ENCODE measurements at regions of chr11 and their contacts with region 1.

Region 1: DNA sequence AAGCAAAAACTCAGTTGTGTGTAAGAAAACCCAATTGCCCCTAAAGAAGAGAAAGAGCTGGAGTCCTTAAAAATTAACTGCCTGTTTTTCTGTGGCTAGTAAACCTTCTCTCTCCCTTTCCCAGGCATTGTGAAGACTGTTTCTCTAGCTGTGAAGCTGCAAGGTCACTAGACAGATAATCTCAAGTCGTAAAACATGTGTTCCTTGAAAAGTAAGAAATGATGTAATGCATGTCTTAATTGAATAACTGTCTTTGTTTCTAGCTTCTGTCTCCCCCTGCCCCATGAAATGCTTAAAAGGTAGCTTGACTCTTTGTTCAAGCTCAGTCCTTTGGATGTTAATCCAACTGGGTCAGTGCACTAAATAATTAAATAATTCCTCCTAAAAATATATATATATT is 29.5 kb upstream of the FAM181B start:
- DNase-seq: no peak
- H3K4me3 ChIP-seq: no peak overlapping the region
- H3K27ac ChIP-seq: no peak overlapping the region
- H3K4me1 ChIP-seq: peaks cover 0 to 6% (median 0%) of the 10 kb centered on the region in 4 donors
- H3K27me3 ChIP-seq: no peaks in the 10 kb centered on the region
- CTCF ChIP-seq: no peak
- EP300 ChIP-seq: no peak
- POLR2A ChIP-seq: no peak

Region 2: DNA sequence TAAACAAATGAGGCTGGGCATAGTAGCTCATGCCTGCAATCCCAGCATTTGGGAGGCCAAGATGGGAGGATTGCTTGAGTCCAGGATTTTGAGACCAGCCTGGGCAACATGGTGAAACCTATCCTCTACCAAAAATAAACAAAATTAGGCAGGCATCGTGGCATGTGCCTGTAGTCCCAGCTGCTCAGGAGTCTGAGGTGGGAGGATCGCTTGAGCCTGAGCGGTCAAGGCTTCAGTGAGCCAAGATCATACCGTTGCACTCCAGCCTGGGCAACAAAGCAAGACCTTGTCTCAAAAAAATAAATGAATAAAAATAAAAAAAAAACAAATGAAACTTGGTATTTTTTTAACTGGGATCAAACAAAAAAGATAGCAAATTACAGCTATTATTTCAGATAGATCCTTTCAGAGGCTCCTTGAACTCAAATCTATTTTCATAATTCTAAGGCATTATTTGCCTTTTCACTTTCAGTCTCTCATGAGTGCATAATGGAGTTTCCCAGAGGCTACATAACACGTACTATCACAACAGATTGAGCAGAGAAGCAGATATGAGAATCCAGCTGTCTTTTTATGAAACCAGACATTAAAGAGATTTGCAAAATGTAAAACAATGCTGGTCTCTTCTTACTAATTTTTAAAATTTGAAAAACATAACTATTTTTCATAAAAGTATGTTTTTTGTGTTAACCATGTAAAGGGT is 161.5 kb after region 1 on chr11:
- in situ Hi-C with region 1: no loop called
- intact Hi-C with region 1: loop called (anchors 5 kb)
- DNase-seq: no peak
- H3K4me3 ChIP-seq: no peak overlapping the region
- H3K27ac ChIP-seq: no peak overlapping the region
- H3K4me1 ChIP-seq: peaks cover 0 to 8% (median 0%) of the 10 kb centered on the region in 4 donors
- H3K27me3 ChIP-seq: no peaks in the 10 kb centered on the region
- CTCF ChIP-seq: no peak
- EP300 ChIP-seq: no peak
- POLR2A ChIP-seq: no peak

Region 3: DNA sequence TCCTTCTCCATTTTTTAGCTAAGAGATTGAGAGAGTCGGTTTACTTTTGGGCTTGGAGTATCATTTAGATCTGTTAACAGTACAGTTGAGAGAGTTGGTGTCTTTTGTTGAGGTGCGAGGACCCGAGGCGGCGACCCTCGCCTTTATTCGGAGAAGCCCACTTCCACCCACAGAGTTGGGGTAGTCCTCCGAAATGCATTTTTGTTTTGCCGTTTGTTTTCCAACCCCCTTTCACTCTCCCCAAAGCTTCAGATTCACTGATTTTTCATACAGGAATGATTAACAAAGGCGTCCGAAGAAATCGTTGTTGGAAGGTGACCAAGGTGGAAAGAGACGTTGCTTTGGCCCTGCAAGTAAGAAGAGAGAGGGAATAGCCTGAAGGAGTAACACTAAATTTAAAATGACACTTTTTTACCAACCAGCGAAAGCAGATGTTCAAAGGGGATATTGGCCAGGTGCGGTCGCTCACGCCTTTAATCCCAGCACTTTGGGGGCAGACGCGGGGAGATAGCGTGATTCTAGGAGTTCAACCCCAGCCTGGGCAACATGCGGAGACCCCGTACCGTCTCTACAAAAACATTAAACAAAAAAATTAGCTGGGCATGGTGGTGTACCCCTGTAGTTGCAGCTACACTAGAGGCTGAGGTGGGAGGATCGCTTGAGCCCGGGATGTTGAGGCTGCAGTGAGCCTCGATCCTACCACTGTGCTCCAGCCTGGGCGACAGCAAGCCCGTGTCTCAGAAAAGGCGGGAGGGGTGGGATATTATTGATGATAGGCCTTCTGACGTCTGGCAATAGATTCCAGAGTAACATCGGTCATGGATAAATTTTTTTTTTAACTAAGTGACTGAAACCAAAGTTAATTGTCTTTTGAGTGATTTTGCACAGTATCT is 309.4 kb after region 1 on chr11:
- in situ Hi-C with region 1: no loop called
- intact Hi-C with region 1: no loop called
- DNase-seq: no peak
- H3K4me3 ChIP-seq: peak overlapping the region; percentile 66 to 84 (median 80)
- H3K27ac ChIP-seq: peak overlapping the region; percentile 90 to 96 (median 95)
- H3K4me1 ChIP-seq: peaks cover 13 to 49% (median 32%) of the 10 kb centered on the region in 4 donors
- H3K27me3 ChIP-seq: no peaks in the 10 kb centered on the region
- CTCF ChIP-seq: no peak
- EP300 ChIP-seq: no peak
- POLR2A ChIP-seq: no peak